Heart left ventricle (tissue), 16 donors: ENCODE measurements at regions of chr4 and their contacts with region 1.

Region 1: GRCh38 chr4:94451695-94452475 is at the start of gene PDLIM5:
- DNase-seq: peak; percentile 93 to 96 (median 94)
- ATAC-seq: peak; percentile 86 to 96 (median 92)
- H3K4me3 ChIP-seq: peak within 1 kb of the TSS; percentile 67 to 99 (median 92)
- H3K27ac ChIP-seq: peak within 1 kb of the TSS; percentile 96 to 100 (median 99)
- H3K4me1 ChIP-seq: peaks cover 0 to 46% (median 18%) of the 10 kb centered on the region in 12 donors
- H3K27me3 ChIP-seq: no peaks in the 10 kb centered on the region
- CTCF ChIP-seq: peak in 1 of 12 donors; percentile 3
- POLR2A ChIP-seq: peak in 1 of 2 donors; percentile 98
- total RNA-seq, gene PDLIM5: 814 to 1,378 (median 1,064) TPM

Region 2: DNA sequence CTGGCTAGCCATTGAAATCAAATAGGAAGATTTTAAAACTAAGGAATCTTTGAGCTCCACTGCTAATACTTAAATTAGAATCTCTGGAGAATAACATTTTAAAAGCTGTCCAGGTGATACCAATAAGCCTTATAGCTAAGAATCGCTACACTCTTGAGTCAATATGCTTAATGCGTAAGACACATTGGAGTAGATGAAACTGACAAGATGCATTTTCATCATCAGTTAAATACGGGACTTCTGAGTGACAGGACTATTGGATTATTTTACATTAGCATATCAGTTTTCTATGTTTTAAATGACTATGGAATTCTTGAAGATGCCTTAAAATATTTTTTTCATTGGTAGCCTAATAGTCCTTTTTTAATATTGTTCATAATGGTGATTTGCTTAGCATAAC is 543.1 kb before region 1 on chr4:
- intact Hi-C with region 1: no loop called
- DNase-seq: no peak
- ATAC-seq: no peak
- H3K4me3 ChIP-seq: no peak overlapping the region
- H3K27ac ChIP-seq: no peak overlapping the region
- H3K4me1 ChIP-seq: no peaks in the 10 kb centered on the region
- H3K27me3 ChIP-seq: no peaks in the 10 kb centered on the region
- CTCF ChIP-seq: no peak
- POLR2A ChIP-seq: no peak

Region 3: DNA sequence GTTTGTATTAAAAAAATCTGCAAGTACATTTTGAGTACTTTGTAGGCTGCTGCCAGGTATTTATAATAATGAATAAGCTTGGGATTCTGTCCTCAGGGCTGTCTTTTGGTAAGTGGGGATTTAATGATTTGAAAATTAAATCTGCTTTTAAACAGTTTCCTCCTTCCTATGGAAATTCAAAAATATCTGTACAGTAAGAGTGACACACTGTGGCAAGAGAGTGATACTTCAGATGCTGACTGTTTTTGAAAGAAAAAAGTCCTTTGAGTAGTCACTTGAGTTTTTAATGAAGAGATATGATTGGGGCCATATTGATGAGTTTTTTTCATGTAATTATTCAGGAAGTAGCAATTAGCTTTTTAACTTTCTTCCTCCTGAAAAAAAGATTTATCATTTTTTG is 195.1 kb before region 1 on chr4:
- intact Hi-C with region 1: no loop called
- DNase-seq: no peak
- ATAC-seq: no peak
- H3K4me3 ChIP-seq: no peak overlapping the region
- H3K27ac ChIP-seq: no peak overlapping the region
- H3K4me1 ChIP-seq: no peaks in the 10 kb centered on the region
- H3K27me3 ChIP-seq: no peaks in the 10 kb centered on the region
- CTCF ChIP-seq: peak in 7 of 12 donors; percentile 15 to 37 (median 25)
- POLR2A ChIP-seq: no peak

Region 4: GRCh38 chr4:94406668-94407437 is 45.0 kb before region 1 on chr4:
- intact Hi-C with region 1: loop called (anchors 2 to 5 kb)
- DNase-seq: peak in 4 of 5 donors; percentile 68 to 79 (median 74)
- ATAC-seq: peak; percentile 31 to 48 (median 42)
- H3K4me3 ChIP-seq: peak overlapping the region in 4 of 12 donors; percentile 4 to 25 (median 16)
- H3K27ac ChIP-seq: peak overlapping the region; percentile 65 to 94 (median 83)
- H3K4me1 ChIP-seq: peaks cover 0 to 56% (median 15%) of the 10 kb centered on the region in 12 donors
- H3K27me3 ChIP-seq: no peaks in the 10 kb centered on the region
- CTCF ChIP-seq: peak; percentile 84 to 96 (median 90)
- POLR2A ChIP-seq: no peak

Region 5: DNA sequence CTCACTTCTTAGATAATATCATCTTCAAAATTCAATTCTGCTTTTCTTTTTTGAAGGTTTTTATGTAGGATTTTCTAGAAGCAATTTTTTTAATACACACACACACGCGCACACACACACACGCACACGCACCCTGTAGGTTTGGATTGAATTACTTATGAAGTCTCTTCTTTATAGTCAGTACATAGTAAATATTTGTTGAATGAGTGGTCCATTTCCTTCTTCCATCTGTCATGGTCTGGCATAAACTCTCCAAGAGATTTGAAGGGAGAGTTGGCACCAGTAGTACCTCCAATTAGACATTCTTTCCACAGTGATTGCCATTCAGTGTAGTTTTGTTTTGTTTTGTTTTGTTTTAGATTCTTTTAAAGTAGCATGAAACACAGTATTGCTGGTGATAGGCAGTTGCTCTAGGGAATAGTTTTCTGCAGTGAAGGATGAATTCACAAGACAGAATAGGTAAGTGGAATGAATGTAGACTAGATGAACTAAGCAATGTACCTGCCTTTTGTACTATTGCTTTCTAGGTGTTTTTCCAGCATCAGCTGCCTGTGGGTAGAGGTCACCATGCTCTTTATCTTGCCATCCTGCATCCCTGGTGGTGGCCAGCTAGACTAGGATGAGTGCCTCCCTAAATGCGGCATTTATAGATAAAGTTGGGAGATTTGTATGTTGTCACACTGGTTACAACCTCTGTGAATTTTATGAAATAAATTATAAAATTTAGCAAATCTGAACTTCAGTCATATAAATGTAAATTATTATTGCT is 20.4 kb after region 1 on chr4:
- intact Hi-C with region 1: no loop called
- DNase-seq: no peak
- ATAC-seq: peak in 3 of 4 donors; percentile 4 to 30 (median 16)
- H3K4me3 ChIP-seq: no peak overlapping the region
- H3K27ac ChIP-seq: peak overlapping the region in 10 of 12 donors; percentile 27 to 70 (median 53)
- H3K4me1 ChIP-seq: peaks cover 0 to 86% (median 50%) of the 10 kb centered on the region in 12 donors
- H3K27me3 ChIP-seq: no peaks in the 10 kb centered on the region
- CTCF ChIP-seq: no peak
- POLR2A ChIP-seq: no peak

Region 6: DNA sequence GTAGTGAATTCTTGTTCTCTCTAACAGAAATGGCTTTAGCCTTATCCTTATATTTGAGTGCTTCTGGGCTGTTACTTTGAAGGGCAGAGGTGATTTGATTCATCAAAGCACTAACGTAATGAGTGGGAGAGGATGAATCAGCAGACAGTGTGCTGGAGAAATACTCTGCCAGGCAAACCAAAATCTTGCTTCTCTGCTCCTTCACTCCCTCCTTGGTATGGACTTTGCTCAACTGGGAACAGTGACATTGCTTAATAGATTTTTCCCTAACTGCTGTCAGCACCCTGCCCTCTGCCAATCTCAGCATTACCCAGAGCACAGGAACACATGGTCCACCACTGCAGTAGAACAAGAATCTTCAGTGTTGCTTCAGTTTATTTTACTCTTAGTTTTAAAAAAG is 55.8 kb after region 1 on chr4:
- intact Hi-C with region 1: loop called in 1 of 10 experiments (anchors 10 kb)
- DNase-seq: peak in 2 of 5 donors; percentile 39 to 41
- ATAC-seq: peak; percentile 60 to 86 (median 82)
- H3K4me3 ChIP-seq: peak overlapping the region in 1 of 12 donors; percentile 5
- H3K27ac ChIP-seq: peak overlapping the region; percentile 8 to 72 (median 46)
- H3K4me1 ChIP-seq: peaks cover 14 to 86% (median 51%) of the 10 kb centered on the region in 12 donors
- H3K27me3 ChIP-seq: no peaks in the 10 kb centered on the region
- CTCF ChIP-seq: no peak
- POLR2A ChIP-seq: no peak

Region 7: GRCh38 chr4:94548571-94548970 is 96.7 kb after region 1 on chr4:
- intact Hi-C with region 1: loop called in 3 of 10 experiments (anchors 5 to 10 kb)
- DNase-seq: peak in 3 of 5 donors; percentile 30 to 48 (median 38)
- ATAC-seq: peak; percentile 72 to 89 (median 84)
- H3K4me3 ChIP-seq: no peak overlapping the region
- H3K27ac ChIP-seq: peak overlapping the region; percentile 65 to 93 (median 82)
- H3K4me1 ChIP-seq: peaks cover 6 to 80% (median 53%) of the 10 kb centered on the region in 12 donors
- H3K27me3 ChIP-seq: no peaks in the 10 kb centered on the region
- CTCF ChIP-seq: no peak
- POLR2A ChIP-seq: no peak

Region 8: GRCh38 chr4:94583914-94584641 is 132.2 kb after region 1 on chr4:
- intact Hi-C with region 1: loop called in 1 of 10 experiments (anchors 10 kb)
- DNase-seq: no peak
- ATAC-seq: peak in 2 of 4 donors; percentile 33 to 38
- H3K4me3 ChIP-seq: no peak overlapping the region
- H3K27ac ChIP-seq: peak overlapping the region in 4 of 12 donors; percentile 1 to 37 (median 32)
- H3K4me1 ChIP-seq: peaks cover 0 to 46% (median 16%) of the 10 kb centered on the region in 12 donors
- H3K27me3 ChIP-seq: no peaks in the 10 kb centered on the region
- CTCF ChIP-seq: no peak
- POLR2A ChIP-seq: no peak

Region 9: DNA sequence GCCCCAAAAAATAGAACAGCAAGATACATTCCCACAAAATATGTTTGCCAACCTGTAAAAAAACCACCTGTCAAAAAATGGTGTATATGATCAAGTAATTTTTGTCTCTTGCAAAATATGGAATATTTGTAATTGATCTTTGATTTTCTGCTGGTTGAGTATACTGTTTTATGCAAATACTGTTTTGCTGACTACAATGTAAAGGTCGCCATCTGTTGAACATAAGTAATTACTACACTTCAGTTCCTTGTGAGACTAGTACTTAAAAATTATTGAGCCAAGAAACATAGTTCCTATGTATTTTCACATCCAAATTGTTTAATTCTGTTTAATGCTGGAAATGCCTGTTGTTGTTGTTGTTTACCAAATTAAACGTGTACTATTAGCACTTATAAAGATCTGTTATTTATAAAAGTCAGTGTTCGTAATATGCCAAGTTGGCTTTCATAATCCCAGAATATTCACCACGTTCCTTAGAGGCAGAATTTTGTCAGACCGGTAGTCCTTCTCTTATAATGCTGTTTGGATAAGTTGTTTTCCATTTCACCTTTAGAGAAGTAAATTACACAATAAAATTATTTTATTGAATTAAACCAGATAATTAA is 144.1 kb after region 1 on chr4:
- intact Hi-C with region 1: loop called in 7 of 10 experiments (anchors 2 to 10 kb)
- DNase-seq: no peak
- ATAC-seq: no peak
- H3K4me3 ChIP-seq: no peak overlapping the region
- H3K27ac ChIP-seq: peak overlapping the region in 2 of 12 donors; percentile 23 to 37
- H3K4me1 ChIP-seq: peaks cover 0 to 18% (median 10%) of the 10 kb centered on the region in 12 donors
- H3K27me3 ChIP-seq: no peaks in the 10 kb centered on the region
- CTCF ChIP-seq: peak; percentile 44 to 78 (median 60)
- POLR2A ChIP-seq: no peak